ENCODE measurements at regions of chr3 and their contacts with region 1.

Region 1: DNA sequence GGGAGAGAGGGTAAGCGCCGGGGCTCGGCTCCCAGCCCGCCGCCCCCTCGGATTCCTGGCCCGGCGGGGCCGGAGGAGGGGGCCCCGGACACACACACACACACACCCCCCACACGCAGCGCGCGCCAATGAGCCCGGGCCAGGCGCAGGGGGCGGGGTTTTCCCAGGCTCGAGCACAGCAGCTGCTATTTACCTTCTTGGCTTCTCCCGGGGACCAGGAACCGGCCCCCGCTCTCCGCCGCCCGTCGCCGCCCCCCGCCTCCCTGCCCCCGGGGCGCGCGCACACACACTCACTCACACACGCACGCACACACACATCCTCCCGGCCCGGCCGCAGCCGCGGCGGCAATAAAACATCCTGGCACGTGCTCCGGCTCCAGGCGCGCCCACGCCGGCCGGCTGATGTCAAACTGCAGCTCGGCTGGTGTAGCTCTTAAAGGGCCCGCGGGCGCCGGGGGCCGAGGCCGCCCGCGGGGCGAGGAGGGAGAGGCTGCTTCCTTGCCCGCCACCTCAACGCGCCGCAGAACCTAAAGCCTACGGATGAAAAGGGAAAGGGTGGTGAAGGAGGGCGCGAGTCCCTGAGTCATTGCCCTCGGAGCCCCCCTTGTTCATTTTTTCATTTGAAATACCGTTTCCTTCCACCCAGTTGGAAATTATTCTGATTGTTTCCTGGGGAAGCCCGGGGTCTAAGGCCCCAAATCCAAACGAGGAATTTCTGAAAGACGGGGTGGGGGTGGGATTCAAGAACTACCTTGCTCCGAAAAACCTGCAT is 1.0 kb upstream of the HES1 start:
- DNase-seq: peak; percentile 95 to 97 (median 95)
- ATAC-seq: peak; percentile 55 to 73 (median 63)
- H3K4me3 ChIP-seq: peak overlapping the region; percentile 44 to 78 (median 66)
- H3K27ac ChIP-seq: peak overlapping the region; percentile 93 to 97 (median 95)
- H3K4me1 ChIP-seq: peaks cover 0 to 53% (median 17%) of the 10 kb centered on the region in 4 donors
- H3K27me3 ChIP-seq: no peaks in the 10 kb centered on the region
- CTCF ChIP-seq: no peak
- POLR2A ChIP-seq: peak; percentile 79

Region 2: GRCh38 chr3:193788189-193788991 is 346.6 kb before region 1 on chr3:
- intact Hi-C with region 1: loop called in 1 of 2 experiments (anchors 10 kb)
- DNase-seq: peak in 2 of 3 donors; percentile 54 to 66
- ATAC-seq: peak; percentile 98 to 99 (median 98)
- H3K4me3 ChIP-seq: no peak overlapping the region
- H3K27ac ChIP-seq: no peak overlapping the region
- H3K4me1 ChIP-seq: peaks cover 0 to 5% (median 0%) of the 10 kb centered on the region in 4 donors
- H3K27me3 ChIP-seq: no peaks in the 10 kb centered on the region
- CTCF ChIP-seq: peak; percentile 75 to 83 (median 80)
- POLR2A ChIP-seq: no peak

Region 3: GRCh38 chr3:194070634-194071409 is 64.1 kb before region 1 on chr3:
- intact Hi-C with region 1: loop called in 1 of 2 experiments (anchors 10 kb)
- DNase-seq: peak; percentile 91 to 93 (median 92)
- ATAC-seq: peak; percentile 58 to 78 (median 69)
- H3K4me3 ChIP-seq: peak overlapping the region; percentile 31 to 62 (median 59)
- H3K27ac ChIP-seq: peak overlapping the region; percentile 83 to 94 (median 87)
- H3K4me1 ChIP-seq: peaks cover 0 to 37% (median 19%) of the 10 kb centered on the region in 4 donors
- H3K27me3 ChIP-seq: no peaks in the 10 kb centered on the region
- CTCF ChIP-seq: peak in 2 of 4 donors; percentile 4 to 11
- POLR2A ChIP-seq: peak; percentile 66

Region 4: GRCh38 chr3:194089357-194090177 is 45.4 kb before region 1 on chr3:
- intact Hi-C with region 1: loop called in 1 of 2 experiments (anchors 5 kb)
- DNase-seq: peak; percentile 76 to 91 (median 86)
- ATAC-seq: peak; percentile 79 to 92 (median 90)
- H3K4me3 ChIP-seq: no peak overlapping the region
- H3K27ac ChIP-seq: peak overlapping the region in 2 of 3 donors; percentile 44 to 53
- H3K4me1 ChIP-seq: peaks cover 0 to 8% (median 2%) of the 10 kb centered on the region in 4 donors
- H3K27me3 ChIP-seq: no peaks in the 10 kb centered on the region
- CTCF ChIP-seq: no peak
- POLR2A ChIP-seq: peak; percentile 38

Measured in right lobe of liver (tissue), 6 donors.